WTC11 (cell line): ENCODE measurements at regions of chr5 and their contacts with region 1.

Region 1: DNA sequence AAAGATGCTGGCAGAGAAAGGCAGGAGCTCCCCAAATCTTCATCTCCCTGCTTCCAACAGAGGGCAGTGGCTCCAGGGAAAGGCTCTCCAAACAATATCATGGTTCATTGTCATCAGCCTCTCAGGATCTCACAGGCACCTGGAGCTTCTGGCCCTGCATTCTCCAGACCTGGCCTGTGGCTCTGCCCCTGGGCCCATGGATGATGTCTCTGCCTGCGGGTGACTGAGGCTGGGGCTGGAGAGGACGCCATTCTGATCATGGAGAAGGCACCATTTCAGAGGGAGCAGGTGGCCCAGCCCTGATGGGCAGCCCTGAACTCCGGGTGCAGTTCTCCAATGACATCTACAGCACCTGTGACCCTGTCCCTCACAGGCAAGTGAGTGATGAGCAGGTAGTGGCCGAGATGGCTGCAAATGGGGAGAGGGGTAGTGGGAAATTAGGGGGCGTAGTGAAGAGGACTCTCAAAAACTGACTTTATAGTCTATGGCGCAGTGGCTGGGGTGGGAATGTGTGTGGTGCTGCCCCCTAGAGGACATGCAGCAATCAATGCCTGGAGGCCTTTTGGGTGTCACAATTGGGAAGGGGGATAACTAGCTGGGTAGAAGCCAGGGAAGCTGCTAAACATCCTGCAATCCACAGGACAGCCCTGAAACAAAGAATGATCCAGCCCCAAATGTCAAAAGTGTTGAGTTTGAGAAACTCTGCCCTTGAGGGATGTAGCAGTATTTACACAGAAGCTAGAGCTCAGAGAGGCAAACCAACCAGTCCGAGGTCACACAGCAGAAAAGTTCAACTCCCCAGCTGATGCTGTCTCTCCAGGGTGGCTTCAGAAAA is 3.2 kb downstream of the SH3PXD2B start:
- DNase-seq: peak; percentile 71
- ATAC-seq: peak; percentile 15
- H3K4me3 Mint-ChIP-seq: no peak overlapping the region
- H3K27ac Mint-ChIP-seq: no peak overlapping the region; the same call in 1 of the 2 replicates
- H3K4me1 Mint-ChIP-seq: peaks cover 70% of the 10 kb centered on the region
- H3K27me3 Mint-ChIP-seq: peaks cover 3% of the 10 kb centered on the region; the same call in 1 of the 2 replicates
- CTCF ChIP-seq: peak; percentile 82

Region 2: DNA sequence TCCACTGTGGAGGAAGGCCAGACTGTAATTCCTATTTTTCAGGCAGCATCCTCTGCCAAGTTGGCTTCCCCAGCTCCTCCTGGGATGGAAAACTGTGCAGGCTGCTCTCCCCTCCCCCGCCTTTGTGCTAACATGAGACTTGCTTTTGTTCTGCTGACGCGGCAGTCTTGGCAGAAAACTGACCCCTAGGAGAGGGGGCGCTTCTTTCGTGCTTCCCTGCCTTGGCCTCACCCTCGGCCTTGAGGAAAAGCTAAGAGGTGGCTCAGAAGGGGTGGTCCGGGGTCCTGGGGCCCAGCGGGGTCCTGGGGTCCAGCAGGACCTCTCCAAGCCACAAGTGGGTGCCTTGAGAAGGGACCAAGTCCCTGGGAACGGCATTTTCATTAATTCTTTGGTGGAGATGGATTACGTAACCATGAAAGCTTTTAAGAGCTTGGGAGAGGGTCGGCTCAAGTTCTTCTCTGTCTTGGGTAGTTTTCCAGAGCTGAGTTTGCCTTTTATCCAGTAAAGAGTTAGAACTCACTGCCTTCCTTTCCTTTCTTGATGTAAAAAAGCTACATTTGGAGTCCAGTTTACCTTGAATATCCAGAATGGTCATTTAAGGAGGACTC is 47.8 kb before region 1 on chr5:
- CTCF ChIA-PET with region 1: interaction called, 33 read pairs
- POLR2A ChIA-PET with region 1: no interaction called
- DNase-seq: peak; percentile 42
- ATAC-seq: peak; percentile 51
- H3K4me3 Mint-ChIP-seq: no peak overlapping the region
- H3K27ac Mint-ChIP-seq: peak overlapping the region; percentile 95
- H3K4me1 Mint-ChIP-seq: peaks cover 34% of the 10 kb centered on the region
- H3K27me3 Mint-ChIP-seq: no peaks in the 10 kb centered on the region
- CTCF ChIP-seq: no peak

Region 3: GRCh38 chr5:172437445-172438308 is 13.4 kb before region 1 on chr5:
- CTCF ChIA-PET with region 1: interaction called, 97 read pairs
- POLR2A ChIA-PET with region 1: no interaction called
- DNase-seq: no peak
- ATAC-seq: no peak
- H3K4me3 Mint-ChIP-seq: no peak overlapping the region
- H3K27ac Mint-ChIP-seq: no peak overlapping the region; the same call in 1 of the 2 replicates
- H3K4me1 Mint-ChIP-seq: no peaks in the 10 kb centered on the region
- H3K27me3 Mint-ChIP-seq: no peaks in the 10 kb centered on the region
- CTCF ChIP-seq: no peak

Region 4: DNA sequence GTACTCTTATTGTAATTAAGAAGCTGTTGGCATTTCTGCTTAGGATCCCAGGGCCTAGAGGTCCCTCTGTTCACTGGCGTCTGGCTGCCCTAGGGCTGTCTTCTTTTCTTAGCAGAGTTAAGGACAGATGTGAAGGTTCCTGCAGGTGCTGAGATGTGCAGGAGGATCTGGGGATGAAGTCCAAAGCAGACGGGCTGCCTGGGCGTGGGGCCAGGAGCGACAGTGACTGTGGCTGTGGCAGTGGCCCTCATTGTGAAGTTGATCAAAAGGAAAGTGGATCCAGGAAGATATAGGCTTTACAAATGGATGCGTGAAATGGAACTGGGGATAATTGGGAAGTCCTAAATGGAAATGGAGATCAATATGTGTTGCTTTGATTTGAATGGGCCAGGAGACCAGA is 22.3 kb after region 1 on chr5:
- CTCF ChIA-PET with region 1: interaction called, 18 read pairs
- POLR2A ChIA-PET with region 1: no interaction called
- DNase-seq: no peak
- ATAC-seq: no peak
- H3K4me3 Mint-ChIP-seq: no peak overlapping the region
- H3K27ac Mint-ChIP-seq: no peak overlapping the region
- H3K4me1 Mint-ChIP-seq: no peaks in the 10 kb centered on the region
- H3K27me3 Mint-ChIP-seq: peaks cover 24% of the 10 kb centered on the region
- CTCF ChIP-seq: no peak

Region 5: DNA sequence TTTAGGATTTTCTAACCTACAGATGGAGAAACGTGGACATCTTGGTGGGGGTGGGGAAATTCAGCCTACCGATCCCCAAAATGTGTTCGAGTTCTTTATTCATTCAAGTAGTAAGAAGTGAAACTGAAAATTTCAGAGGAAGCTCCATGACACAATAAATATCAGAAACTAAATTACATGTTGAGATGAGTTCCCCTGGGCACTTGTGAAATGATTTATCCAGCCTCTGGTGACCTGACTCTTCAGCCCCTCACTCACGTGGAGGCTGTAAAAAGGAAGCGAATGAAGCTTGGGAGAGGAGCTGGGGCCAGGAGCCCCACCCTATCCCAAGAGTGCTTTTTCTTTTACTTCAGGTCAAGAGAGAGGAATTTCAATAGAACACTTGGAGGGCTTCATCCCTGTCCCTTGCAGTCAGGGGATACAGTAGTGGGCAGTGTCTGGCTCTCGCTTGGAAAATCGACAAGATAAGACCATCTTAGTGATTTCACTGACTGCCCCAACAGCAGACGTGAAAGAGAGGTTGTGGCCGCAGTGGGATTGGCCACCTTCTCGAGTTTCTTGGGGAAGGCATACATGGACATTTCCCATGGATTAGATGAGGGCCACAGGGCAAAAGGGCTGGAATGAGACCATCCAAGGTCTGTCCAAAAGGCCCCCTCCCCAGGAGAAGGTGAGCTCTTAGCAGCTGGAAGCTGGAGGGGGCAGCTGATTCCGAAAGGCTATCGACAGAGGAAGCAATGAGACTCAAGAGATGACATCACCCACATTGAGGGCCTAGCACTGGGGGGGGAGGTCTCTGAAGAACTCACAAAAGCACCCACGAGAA is 80.0 kb after region 1 on chr5:
- CTCF ChIA-PET with region 1: no interaction called
- POLR2A ChIA-PET with region 1: no interaction called
- DNase-seq: no peak
- ATAC-seq: no peak
- H3K4me3 Mint-ChIP-seq: no peak overlapping the region
- H3K27ac Mint-ChIP-seq: no peak overlapping the region
- H3K4me1 Mint-ChIP-seq: no peaks in the 10 kb centered on the region
- H3K27me3 Mint-ChIP-seq: peaks cover 13% of the 10 kb centered on the region
- CTCF ChIP-seq: no peak

Region 6: DNA sequence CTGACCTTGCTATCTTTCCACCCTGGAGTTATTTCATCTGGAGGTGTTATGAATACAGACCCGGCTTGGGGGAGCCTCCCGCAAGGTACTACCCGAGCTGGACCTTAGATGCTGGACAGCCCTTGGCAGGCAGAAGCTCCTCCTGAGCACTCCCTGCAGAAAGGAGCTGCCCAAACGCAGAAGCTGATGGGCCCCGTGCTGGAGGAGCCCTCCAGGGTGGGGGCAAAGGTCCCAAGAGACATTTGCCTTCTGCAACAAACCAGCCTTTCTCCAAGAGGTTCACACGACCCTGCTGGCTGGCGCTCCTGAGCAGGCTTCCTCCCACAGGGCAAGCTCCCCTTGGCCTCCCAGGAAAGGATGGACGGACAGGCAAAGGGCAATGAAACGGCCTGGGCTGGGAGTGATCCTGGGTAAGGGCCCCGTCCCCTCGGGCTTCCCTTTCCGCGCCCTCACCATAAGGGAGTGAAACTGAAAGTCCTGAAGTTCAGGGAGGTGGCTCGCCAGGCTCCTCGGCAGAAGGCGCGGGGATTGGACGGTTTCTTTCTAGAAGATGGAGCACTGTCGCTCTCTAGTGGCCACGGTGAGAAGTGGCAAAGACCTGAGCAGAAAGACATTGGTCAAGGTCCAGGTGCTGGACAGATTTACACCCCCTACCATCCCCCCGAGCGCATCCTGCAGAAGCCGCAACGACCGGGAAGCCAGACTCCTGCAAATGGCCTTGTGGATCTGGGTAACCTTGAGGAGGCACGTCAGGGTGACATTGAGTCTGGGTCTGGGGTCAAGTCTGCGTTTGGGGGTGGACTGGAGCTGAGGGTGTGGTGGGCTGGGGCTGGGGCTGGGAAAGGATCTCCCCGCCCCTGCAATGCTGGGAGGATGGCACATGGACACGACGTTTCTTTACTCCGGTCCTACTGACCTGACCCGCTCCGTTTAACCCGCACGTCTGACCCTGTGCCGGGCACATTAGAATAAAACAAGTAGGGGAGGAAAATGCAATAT is 246.3 kb after region 1 on chr5:
- CTCF ChIA-PET with region 1: interaction called, 15 read pairs
- POLR2A ChIA-PET with region 1: no interaction called
- DNase-seq: peak; percentile 89
- ATAC-seq: peak; percentile 60
- H3K4me3 Mint-ChIP-seq: peak overlapping the region; percentile 66
- H3K27ac Mint-ChIP-seq: no peak overlapping the region
- H3K4me1 Mint-ChIP-seq: peaks cover 47% of the 10 kb centered on the region
- H3K27me3 Mint-ChIP-seq: peaks cover 32% of the 10 kb centered on the region
- CTCF ChIP-seq: peak; percentile 85